HepG2 (cell line): ENCODE measurements at regions of chr7 and their contacts with region 1.

Region 1: GRCh38 chr7:55641273-55641691 is 69.0 kb upstream of the VOPP1 start:
- DNase-seq: peak; percentile 71
- ATAC-seq: peak; percentile 97
- H3K4me3 ChIP-seq: no peak overlapping the region
- H3K27ac ChIP-seq: no peak overlapping the region
- H3K4me1 ChIP-seq: no peaks in the 10 kb centered on the region
- H3K27me3 ChIP-seq: no peaks in the 10 kb centered on the region; a peak in 1 of 5 replicates
- CTCF ChIP-seq: peak; percentile 91
- EP300 ChIP-seq: no peak
- POLR2A ChIP-seq: no peak
- RAD21 ChIP-seq: peak; percentile 86

Region 2: GRCh38 chr7:55477781-55478374 is 163.4 kb before region 1 on chr7:
- CTCF ChIA-PET with region 1: no interaction called
- POLR2A ChIA-PET with region 1: no interaction called
- in situ Hi-C with region 1: no loop called
- intact Hi-C with region 1: no loop called
- DNase-seq: no peak
- ATAC-seq: no peak
- H3K4me3 ChIP-seq: no peak overlapping the region
- H3K27ac ChIP-seq: no peak overlapping the region
- H3K4me1 ChIP-seq: no peaks in the 10 kb centered on the region
- H3K27me3 ChIP-seq: no peaks in the 10 kb centered on the region
- CTCF ChIP-seq: no peak
- EP300 ChIP-seq: no peak
- POLR2A ChIP-seq: no peak
- RAD21 ChIP-seq: no peak

Region 3: GRCh38 chr7:55723621-55723941 is 82.3 kb after region 1 on chr7:
- CTCF ChIA-PET with region 1: interaction called, 6 read pairs
- POLR2A ChIA-PET with region 1: no interaction called
- in situ Hi-C with region 1: loop called (anchors 10 kb)
- intact Hi-C with region 1: loop called (anchors 1 kb)
- DNase-seq: no peak
- ATAC-seq: no peak
- H3K4me3 ChIP-seq: peak overlapping the region in 1 of 3 experiments; percentile 37; a peak in 1 of 6 replicates
- H3K27ac ChIP-seq: no peak overlapping the region
- H3K4me1 ChIP-seq: peaks cover 14% of the 10 kb centered on the region
- H3K27me3 ChIP-seq: no peaks in the 10 kb centered on the region
- CTCF ChIP-seq: no peak
- EP300 ChIP-seq: no peak
- POLR2A ChIP-seq: no peak
- RAD21 ChIP-seq: no peak

Region 4: DNA sequence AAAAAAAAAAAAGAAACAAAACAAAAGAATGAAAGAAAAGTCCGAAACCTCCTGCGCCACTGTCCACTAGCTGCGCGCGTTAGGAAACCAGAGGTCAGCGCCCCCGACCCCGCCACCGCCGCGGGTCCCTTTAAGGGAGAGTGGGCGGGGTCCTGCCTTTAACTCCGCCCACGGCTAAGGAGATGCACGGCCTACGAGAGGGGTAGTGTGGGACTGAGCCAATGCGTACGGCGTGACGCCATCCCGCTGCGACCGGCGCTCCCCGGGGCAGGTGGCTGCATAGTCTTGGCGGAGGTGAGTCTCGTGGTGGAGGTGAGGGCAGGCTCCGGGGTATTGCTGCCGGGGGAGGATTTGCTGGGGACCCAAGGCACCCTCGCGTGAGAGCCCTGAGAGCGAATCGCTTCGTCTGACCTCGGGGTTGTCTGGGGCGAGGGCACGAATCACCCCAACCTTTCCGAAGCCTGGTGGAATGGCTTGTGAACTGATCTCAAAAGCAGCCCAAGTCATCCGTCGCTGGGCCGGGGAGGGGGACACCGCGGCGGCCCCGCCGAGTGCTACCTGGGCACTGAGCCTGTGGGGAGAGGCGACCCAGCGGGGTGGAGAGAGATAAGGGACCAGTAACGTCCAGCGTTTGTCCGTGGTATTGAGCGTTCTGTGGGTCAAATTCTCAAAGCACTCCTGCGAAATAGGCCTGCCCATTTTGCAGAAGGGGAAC is 310.5 kb after region 1 on chr7 and contains the start of gene MRPS17:
- CTCF ChIA-PET with region 1: no interaction called
- POLR2A ChIA-PET with region 1: no interaction called
- in situ Hi-C with region 1: loop called (anchors 25 kb)
- intact Hi-C with region 1: no loop called
- DNase-seq: peak; percentile 89
- ATAC-seq: peak; percentile 98
- H3K4me3 ChIP-seq: peak within 1 kb of the TSS; percentile 79 to 99 (median 84)
- H3K27ac ChIP-seq: peak within 1 kb of the TSS; percentile 68
- H3K4me1 ChIP-seq: peaks cover 34% of the 10 kb centered on the region
- H3K27me3 ChIP-seq: no peaks in the 10 kb centered on the region; a peak in 1 of 5 replicates
- CTCF ChIP-seq: peak; percentile 28; the same call in 1 of the 2 replicates
- EP300 ChIP-seq: no peak
- POLR2A ChIP-seq: peak; percentile 90 to 96
- RAD21 ChIP-seq: peak; percentile 37; the same call in 1 of the 2 replicates
- total RNA-seq, gene MRPS17: 31.3 and 39.2 TPM in 2 replicates

Region 5: DNA sequence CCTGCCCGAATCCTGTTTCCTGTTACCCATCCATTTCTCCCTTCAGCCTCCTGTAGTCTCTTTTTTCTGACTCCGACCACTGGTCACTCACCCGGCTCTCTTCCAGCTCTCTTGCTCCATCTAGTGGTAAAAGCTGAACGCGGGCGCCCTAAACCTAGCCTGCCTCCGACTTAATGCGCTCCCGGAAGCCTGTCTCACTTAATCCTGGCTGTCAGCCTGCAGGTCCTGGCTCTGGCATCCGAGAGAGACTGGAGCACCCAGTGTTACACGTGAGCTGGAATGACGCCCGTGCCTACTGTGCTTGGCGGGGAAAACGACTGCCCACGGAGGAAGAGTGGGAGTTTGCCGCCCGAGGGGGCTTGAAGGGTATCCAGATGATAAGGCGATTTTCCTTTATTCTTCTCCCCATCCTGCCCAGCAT is 433.1 kb after region 1 on chr7:
- CTCF ChIA-PET with region 1: interaction called, 6 read pairs
- POLR2A ChIA-PET with region 1: no interaction called
- in situ Hi-C with region 1: loop called (anchors 10 kb)
- intact Hi-C with region 1: loop called (anchors 1 kb)
- DNase-seq: peak; percentile 68
- ATAC-seq: peak; percentile 94
- H3K4me3 ChIP-seq: no peak overlapping the region
- H3K27ac ChIP-seq: no peak overlapping the region
- H3K4me1 ChIP-seq: peaks cover 18% of the 10 kb centered on the region
- H3K27me3 ChIP-seq: no peaks in the 10 kb centered on the region
- CTCF ChIP-seq: peak; percentile 93
- EP300 ChIP-seq: no peak
- POLR2A ChIP-seq: no peak
- RAD21 ChIP-seq: peak; percentile 92

Region 6: GRCh38 chr7:56092789-56093531 is 451.7 kb after region 1 on chr7 and contains the start of gene PHKG1:
- CTCF ChIA-PET with region 1: interaction called, 6 read pairs
- POLR2A ChIA-PET with region 1: no interaction called
- in situ Hi-C with region 1: no loop called
- intact Hi-C with region 1: loop called (anchors 1 kb)
- DNase-seq: peak; percentile 33
- ATAC-seq: peak; percentile 96
- H3K4me3 ChIP-seq: no peak within 1 kb of the TSS; a peak in 1 of 6 replicates
- H3K27ac ChIP-seq: no peak within 1 kb of the TSS
- H3K4me1 ChIP-seq: peaks cover 15% of the 10 kb centered on the region
- H3K27me3 ChIP-seq: no peaks in the 10 kb centered on the region
- CTCF ChIP-seq: peak; percentile 77
- EP300 ChIP-seq: no peak
- POLR2A ChIP-seq: no peak
- RAD21 ChIP-seq: peak; percentile 62
- total RNA-seq, gene PHKG1: 0.44 TPM in 1 of 2 replicates, not detected in the other